Right ventricle myocardium superior (tissue), 1 donor: ENCODE measurements at regions of chr17 and their contacts with region 1.

Region 1: GRCh38 chr17:27879987-27880608 is 13.1 kb downstream of the LYRM9 start:
- DNase-seq: peak; percentile 79
- ATAC-seq: peak; percentile 97

Region 2: DNA sequence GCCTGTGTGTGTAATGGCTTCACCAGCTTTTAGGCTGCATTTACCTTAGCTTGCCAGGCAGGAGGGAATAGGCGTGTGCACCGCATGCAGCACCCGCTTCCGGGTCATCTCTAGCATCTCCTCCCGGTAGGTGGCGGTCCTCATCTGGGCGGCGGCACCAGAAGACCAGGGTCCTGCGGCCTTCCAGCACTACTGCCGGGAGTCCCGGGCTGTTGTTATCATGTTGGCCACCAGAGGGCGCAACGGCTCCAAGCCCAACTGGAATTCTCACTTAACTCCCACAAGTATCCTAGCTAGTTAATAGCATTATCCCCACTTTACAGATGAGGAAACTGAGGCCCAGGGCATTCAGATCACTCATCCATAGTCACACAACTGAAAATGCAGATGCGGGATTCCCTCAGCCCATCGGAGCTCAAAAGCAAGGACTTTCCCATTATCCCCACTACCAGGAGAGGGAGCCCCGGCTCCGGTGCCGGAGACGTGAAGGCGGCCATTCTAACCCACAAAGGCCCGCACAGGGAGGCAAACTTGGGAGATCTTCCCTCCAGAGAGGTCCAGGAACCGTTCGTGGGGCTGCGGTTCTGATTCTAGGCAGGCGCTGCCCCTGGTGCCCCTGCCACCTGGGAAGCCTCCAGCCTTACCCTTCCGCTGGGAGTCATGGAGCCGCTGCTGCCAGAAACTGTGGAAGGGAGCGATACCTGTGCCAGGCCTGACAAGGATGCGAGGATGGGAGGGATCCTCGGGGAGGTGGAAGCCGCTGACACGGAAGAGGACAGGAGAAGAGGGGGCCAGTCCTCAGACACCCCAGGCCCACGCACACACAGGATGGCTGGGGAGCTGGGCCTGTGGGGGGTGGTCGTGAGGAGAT is 225.2 kb before region 1 on chr17:
- intact Hi-C with region 1: loop called (anchors 5 kb)
- DNase-seq: peak; percentile 81
- ATAC-seq: peak; percentile 44

Region 3: GRCh38 chr17:27805520-27806146 is 74.5 kb before region 1 on chr17:
- intact Hi-C with region 1: loop called (anchors 2 kb)
- DNase-seq: peak; percentile 81
- ATAC-seq: peak; percentile 96

Region 4: DNA sequence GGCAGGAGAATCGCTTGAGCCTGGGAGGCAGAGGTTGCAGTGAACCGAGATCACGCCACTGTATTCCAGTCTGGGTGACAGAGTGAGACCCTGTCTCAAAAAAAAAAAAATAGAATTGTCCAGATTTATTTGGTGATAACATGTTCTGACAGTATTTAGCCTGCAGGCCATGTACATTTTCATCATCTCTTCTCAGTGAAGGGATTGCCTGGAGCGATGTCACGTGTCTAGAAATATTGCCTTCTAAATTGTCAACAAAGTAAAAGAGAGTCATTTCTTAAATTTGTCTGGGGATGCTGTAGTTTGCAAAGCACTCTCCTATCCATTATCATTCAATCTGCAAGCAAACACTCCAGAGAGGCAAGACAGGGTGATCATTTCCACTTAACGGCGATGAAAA is 144.6 kb after region 1 on chr17:
- intact Hi-C with region 1: no loop called
- DNase-seq: no peak
- ATAC-seq: no peak